WTC11 (cell line): ENCODE measurements at regions of chr17 and their contacts with region 1.

Region 1: DNA sequence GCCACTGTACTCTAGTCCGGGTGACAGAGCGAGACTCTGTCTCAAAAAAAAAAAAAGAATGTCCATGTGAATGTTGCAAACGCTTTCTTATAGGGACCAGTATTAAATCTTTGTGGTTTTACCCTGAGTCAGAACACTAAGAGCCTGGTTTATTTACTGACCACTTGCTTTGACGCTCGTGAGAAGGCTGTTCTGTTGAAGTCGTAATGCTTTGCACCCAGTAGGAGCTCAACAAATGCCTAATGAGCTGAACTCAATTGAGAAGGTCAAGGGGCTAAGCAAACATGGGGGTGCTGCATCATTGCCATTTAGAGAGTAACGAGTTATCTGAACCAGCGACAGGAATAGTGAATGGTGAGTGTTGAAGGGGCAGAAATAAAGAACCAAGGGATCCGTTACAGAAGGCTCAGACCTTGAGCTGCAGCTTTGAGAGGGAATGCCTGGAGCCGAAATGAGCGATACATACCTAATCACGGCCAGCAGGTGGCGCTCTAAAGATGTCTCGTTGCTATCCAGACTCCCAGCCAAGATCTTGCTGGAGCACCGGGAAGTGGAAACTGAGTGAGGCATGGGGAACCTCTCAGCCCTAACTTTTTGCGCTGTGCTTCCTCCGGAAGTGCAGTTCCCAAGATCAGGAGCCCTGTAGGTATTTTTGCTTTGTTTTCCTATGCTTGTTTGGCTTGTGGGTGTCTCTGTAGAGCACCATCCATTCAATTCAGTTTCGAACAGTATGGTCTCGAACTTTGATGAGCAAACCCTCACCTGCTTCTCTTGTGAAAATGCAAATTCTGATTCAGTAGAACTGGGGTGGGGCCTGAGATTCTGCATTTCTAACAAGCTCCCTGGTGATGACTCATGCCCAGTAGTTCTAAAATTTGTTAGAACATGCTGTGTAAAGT is 12.6 kb upstream of the RNF222 start:
- DNase-seq: peak; percentile 92
- ATAC-seq: peak; percentile 88
- H3K4me3 Mint-ChIP-seq: no peak overlapping the region
- H3K27ac Mint-ChIP-seq: no peak overlapping the region
- H3K4me1 Mint-ChIP-seq: peaks cover 14% of the 10 kb centered on the region
- H3K27me3 Mint-ChIP-seq: peaks cover 2% of the 10 kb centered on the region; the same call in 1 of the 2 replicates
- CTCF ChIP-seq: peak; percentile 90

Region 2: GRCh38 chr17:8366231-8366630 is 44.0 kb before region 1 on chr17:
- CTCF ChIA-PET with region 1: no interaction called
- POLR2A ChIA-PET with region 1: no interaction called
- DNase-seq: no peak
- ATAC-seq: no peak
- H3K4me3 Mint-ChIP-seq: no peak overlapping the region
- H3K27ac Mint-ChIP-seq: no peak overlapping the region
- H3K4me1 Mint-ChIP-seq: peaks cover 2% of the 10 kb centered on the region
- H3K27me3 Mint-ChIP-seq: no peaks in the 10 kb centered on the region
- CTCF ChIP-seq: no peak

Region 3: DNA sequence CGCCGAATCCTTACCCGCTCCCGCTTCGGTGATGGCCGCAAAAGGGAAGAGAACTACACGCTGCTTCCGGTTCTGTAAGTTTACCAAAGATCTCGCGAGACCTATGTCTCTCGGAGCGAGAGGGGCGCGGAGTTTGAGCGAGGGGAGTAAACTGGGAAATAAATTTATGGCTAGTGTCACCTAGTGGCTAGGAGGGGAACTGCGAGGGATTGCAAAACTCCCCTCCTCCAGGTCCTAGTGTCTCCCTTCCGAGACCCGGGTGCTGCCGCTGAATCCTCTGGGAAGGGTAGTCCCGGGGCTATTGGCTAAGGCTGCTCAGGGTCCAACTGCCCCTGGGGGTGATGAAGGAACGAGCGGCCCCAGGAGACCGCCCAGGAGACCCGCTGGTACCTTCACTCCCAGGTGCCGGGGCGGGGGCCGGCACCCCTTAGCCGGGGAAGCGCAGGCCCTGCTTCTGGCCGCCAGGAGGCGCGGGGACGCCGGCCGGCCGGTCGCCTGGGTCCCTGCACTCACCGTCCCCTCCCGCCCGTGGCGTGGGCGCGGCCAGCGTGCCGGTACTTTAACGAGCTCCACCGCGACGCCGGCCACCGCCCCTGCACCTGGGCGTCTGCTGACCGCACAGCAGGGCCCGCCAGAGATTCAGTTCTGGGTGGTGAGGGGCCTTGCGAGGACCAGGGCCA is 26.9 kb before region 1 on chr17 and contains the start of gene RPL26:
- CTCF ChIA-PET with region 1: interaction called, 27 read pairs
- POLR2A ChIA-PET with region 1: no interaction called
- DNase-seq: peak; percentile 97
- ATAC-seq: peak; percentile 91
- H3K4me3 Mint-ChIP-seq: peak within 1 kb of the TSS; percentile 98
- H3K27ac Mint-ChIP-seq: peak within 1 kb of the TSS; percentile 98
- H3K4me1 Mint-ChIP-seq: peaks cover 48% of the 10 kb centered on the region
- H3K27me3 Mint-ChIP-seq: no peaks in the 10 kb centered on the region
- CTCF ChIP-seq: peak; percentile 95
- total RNA-seq, gene RPL26: 1,825 to 2,081 TPM (median 2,046 TPM) in 3 replicates

Region 4: GRCh38 chr17:8420041-8420934 is 10.1 kb after region 1 on chr17:
- CTCF ChIA-PET with region 1: interaction called, 17 read pairs
- POLR2A ChIA-PET with region 1: no interaction called
- DNase-seq: no peak
- ATAC-seq: no peak
- H3K4me3 Mint-ChIP-seq: no peak overlapping the region
- H3K27ac Mint-ChIP-seq: no peak overlapping the region
- H3K4me1 Mint-ChIP-seq: no peaks in the 10 kb centered on the region
- H3K27me3 Mint-ChIP-seq: peaks cover 20% of the 10 kb centered on the region
- CTCF ChIP-seq: no peak

Region 5: DNA sequence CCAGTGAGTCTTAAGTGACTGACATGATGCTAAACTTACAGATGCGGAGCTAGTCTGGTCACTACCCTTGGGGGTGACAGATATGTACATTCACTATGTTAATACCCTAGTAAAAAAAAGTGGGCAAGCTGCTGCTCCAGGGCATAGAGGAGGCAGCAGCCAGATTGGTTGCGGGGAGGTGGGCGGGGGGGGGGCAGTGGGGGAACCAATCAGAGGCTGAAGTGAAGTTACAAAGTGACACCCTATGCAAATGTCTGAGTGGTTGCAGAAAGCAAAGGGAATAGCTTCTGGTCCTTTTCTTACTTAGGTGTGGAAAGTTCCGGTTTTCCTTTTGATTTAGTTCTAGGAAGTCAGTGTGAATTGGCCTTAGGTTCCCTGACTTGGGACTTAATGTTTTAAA is 37.6 kb after region 1 on chr17:
- CTCF ChIA-PET with region 1: interaction called, 11 read pairs
- POLR2A ChIA-PET with region 1: no interaction called
- DNase-seq: no peak
- ATAC-seq: peak; percentile 75
- H3K4me3 Mint-ChIP-seq: no peak overlapping the region
- H3K27ac Mint-ChIP-seq: peak overlapping the region; percentile 62
- H3K4me1 Mint-ChIP-seq: peaks cover 16% of the 10 kb centered on the region
- H3K27me3 Mint-ChIP-seq: no peaks in the 10 kb centered on the region
- CTCF ChIP-seq: no peak

Region 6: DNA sequence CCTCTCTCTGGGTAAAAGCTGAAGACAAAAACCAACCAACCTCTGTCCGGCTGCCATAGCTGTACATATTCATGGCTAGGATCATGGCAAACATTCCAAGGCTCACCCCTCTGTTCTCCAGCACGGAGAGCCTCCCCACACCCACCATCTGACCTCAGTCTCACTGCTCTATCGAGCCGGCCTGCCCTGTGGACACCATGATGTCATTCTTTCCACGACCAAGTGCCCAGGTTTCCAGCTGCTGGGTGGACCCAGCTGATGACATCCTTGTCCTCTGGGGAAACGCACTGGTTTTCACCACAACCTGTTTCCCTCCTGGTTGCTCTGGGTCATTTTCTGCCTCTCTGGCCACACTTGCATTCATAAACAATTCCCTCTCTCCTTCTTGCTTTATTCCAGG is 93.2 kb after region 1 on chr17:
- CTCF ChIA-PET with region 1: no interaction called
- POLR2A ChIA-PET with region 1: no interaction called
- DNase-seq: no peak
- ATAC-seq: no peak
- H3K4me3 Mint-ChIP-seq: no peak overlapping the region
- H3K27ac Mint-ChIP-seq: peak overlapping the region; percentile 45; the same call in 1 of the 2 replicates
- H3K4me1 Mint-ChIP-seq: no peaks in the 10 kb centered on the region
- H3K27me3 Mint-ChIP-seq: no peaks in the 10 kb centered on the region
- CTCF ChIP-seq: no peak